Cardiac septum (tissue), 1 donor: ENCODE measurements at regions of chr19 and their contacts with region 1.

Region 1: GRCh38 chr19:29665215-29665825 is at the start of gene PLEKHF1:
- DNase-seq: peak; percentile 95
- total RNA-seq, gene PLEKHF1: 9.5 TPM

Region 2: GRCh38 chr19:29546583-29547190 is 118.6 kb before region 1 on chr19:
- intact Hi-C with region 1: no loop called
- DNase-seq: peak; percentile 55

Region 3: GRCh38 chr19:29645911-29646310 is 19.4 kb before region 1 on chr19:
- intact Hi-C with region 1: loop called (anchors 2 kb)
- DNase-seq: peak; percentile 79

Region 4: DNA sequence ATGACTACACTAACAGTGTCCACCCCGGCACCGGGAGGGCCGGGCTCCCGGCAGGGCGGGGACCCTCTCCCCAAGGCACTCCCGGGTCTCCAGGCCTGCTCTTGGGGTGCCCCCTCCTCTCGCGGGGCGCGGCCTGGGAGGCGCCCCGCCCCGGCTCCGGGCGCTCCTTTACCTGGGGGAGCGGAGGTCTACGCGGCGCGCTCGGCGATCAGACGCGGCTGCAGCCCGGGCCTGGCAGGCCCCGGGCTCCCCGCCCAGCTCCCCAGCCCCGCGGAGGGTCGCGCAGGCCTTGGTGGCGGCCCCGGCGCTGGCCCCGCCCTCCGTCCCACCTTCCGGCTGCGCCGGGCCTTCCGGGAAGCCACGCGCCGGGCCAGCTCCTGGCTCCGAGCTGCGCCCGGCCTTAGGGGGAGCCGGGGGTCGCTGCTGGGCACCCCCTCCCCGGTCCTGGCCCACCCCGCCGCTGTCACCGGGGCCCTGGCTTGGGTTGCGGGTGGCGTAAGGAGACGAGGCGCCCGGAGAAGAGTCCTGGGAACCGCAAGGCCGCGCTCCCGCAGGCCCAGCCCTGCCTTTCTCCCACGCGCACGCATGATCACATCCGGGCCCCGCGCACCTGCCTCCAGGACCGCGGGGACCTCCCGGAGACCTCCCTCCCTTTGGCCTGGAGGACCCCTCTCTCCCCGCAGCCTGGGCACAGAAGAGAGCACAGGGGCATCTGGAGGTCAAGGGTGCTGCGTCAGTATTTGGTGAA is 49.8 kb after region 1 on chr19 and contains the start of gene C19orf12:
- intact Hi-C with region 1: loop called (anchors 2 kb)
- DNase-seq: no peak
- total RNA-seq, gene C19orf12: 38.0 TPM